ENCODE measurements at regions of chr9 and their contacts with region 1.

Region 1: GRCh38 chr9:882478-882877 is 41.0 kb downstream of the DMRT1 start:
- DNase-seq: no peak
- CTCF ChIP-seq: no peak

Region 2: DNA sequence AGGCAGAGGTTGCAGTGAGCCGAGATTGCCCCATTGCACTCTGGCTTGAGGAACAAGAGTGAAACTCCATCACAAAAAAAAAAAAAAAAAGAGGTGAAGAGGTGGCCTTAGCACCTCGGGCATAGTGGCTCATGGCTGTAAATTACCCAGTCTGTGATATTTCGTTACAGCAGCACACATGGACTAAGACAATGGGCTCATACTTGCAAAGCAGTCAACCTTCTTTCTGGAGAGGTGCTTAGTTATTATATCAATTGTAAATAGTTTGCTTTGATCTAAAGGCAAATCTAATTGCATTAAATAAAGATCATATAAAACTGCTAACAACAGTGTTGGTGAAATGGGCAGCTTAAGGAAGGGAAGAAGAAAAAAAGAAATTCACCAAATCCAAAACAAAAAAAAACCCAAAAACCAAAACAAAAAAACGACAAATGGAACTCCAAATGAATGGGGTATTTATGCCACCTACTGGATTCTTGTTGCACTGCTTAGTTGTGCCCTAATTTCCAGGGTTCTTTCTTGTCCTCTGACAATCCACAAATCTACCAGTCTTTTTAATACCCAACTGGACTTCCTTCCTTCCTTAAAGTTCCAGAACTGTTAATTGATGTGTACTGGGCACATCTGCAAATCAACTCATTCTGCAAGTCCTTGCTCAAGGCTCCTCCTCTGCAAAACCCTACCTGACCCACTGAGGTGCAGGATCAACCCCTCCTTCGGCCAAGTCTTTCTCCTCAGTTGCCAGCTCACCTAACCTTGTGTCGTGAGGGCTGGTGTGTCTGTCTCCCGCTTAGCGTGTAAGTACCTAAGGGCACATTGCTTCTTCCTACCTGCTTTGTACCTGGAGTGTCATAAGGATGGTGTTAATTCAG is 76.0 kb before region 1 on chr9:
- CTCF ChIA-PET with region 1: no interaction called
- POLR2A ChIA-PET with region 1: interaction called, 11 read pairs
- DNase-seq: peak; percentile 48
- CTCF ChIP-seq: peak; percentile 53

Region 3: DNA sequence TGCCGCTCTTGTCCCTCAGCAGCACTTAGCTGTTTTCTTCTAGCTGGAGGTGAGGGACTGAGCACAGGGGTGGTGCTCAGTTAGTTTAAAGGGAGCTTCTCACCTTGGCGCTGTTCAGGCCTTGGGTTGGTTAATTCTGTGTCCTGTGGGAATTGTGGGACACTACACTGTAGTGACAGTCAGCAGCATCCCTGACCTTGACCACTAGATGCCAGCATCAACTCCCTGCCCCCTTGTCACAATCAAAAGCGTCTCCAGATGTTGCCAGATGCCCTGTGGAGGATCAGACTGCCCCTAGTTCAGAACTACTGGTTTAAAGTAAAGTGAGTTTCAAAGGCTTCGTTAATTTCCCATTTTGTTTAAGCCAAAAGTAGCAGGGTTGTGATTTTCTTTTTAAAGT is 28.5 kb after region 1 on chr9:
- CTCF ChIA-PET with region 1: no interaction called
- POLR2A ChIA-PET with region 1: no interaction called
- DNase-seq: no peak
- CTCF ChIP-seq: no peak

Measured in GM10248 (cell line).